Naive thymus-derived CD4-positive, alpha-beta T cell (primary cell): ENCODE measurements at regions of chr10 and their contacts with region 1.

Region 1: GRCh38 chr10:122407375-122408125 is 33.0 kb downstream of the PLEKHA1 start:
- DNase-seq: peak in 7 of 9 donors; percentile 53 to 78 (median 65)
- ATAC-seq: peak; percentile 76
- H3K4me3 ChIP-seq: no peak overlapping the region
- H3K4me3 Mint-ChIP-seq: peak overlapping the region in 9 of 10 donors; percentile 13 to 75 (median 53)
- H3K27ac ChIP-seq: peak overlapping the region; percentile 54
- H3K27ac Mint-ChIP-seq: peak overlapping the region in 6 of 9 donors; percentile 81 to 95 (median 88)
- H3K4me1 ChIP-seq: peaks cover 0 to 52% of the 10 kb centered on the region in 2 donors
- H3K4me1 Mint-ChIP-seq: peaks cover 18 to 61% (median 54%) of the 10 kb centered on the region in 7 donors
- H3K27me3 ChIP-seq: no peaks in the 10 kb centered on the region
- H3K27me3 Mint-ChIP-seq: peaks cover 0 to 7% (median 0%) of the 10 kb centered on the region in 5 donors

Region 2: GRCh38 chr10:121956111-121957061 is 451.2 kb before region 1 on chr10:
- CTCF ChIA-PET with region 1: no interaction called
- POLR2A ChIA-PET with region 1: no interaction called
- intact Hi-C with region 1: no loop called
- DNase-seq: no peak
- ATAC-seq: no peak
- H3K4me3 ChIP-seq: no peak overlapping the region
- H3K4me3 Mint-ChIP-seq: no peak overlapping the region
- H3K27ac ChIP-seq: no peak overlapping the region
- H3K27ac Mint-ChIP-seq: peak overlapping the region in 2 of 9 donors; percentile 11 to 37
- H3K4me1 ChIP-seq: no peaks in the 10 kb centered on the region
- H3K4me1 Mint-ChIP-seq: peaks cover 0 to 2% (median 0%) of the 10 kb centered on the region in 7 donors
- H3K27me3 ChIP-seq: no peaks in the 10 kb centered on the region
- H3K27me3 Mint-ChIP-seq: no peaks in the 10 kb centered on the region

Region 3: DNA sequence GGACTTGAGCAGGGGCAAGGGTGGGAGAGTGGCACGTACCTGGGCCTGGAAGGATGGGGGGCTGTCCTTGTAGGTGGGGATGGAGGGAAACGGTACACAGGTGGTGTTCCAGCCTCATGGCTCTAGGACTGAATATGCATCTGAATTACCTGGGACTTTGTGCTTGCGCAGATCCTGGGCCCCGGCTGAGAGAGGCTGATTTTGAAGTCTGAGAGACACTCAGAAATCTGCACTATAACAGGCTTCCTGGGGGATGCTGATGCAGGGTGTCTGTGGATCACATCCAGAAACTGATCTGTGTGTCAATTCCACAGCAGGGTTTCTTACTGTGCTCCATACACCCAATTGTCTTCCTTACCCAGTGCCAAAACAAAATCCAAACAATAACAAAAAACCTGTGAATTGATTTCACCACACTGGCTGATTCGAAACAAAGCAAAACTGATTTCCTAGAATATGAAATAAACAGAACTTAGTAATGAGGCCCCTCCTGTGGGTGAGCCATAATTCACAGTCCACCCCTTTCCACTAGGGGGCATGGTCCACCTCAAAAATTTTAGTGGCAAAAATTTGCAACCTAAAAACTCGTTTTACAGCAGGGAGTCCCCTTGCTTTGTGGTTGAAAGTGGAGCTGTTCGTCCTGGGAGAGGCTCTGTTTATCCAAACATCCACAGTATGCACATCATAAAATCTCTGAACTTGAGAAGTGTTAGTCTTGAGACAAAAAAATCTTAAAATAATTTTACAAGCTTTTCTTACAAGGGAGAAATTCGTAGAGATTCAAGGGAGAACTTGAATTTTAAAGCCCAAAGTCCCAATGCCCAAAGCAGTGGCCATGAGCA is 65.0 kb before region 1 on chr10:
- CTCF ChIA-PET with region 1: interaction called, 10 read pairs
- POLR2A ChIA-PET with region 1: interaction called, 3 read pairs
- intact Hi-C with region 1: no loop called
- DNase-seq: peak in 8 of 9 donors; percentile 33 to 78 (median 66)
- ATAC-seq: peak; percentile 80
- H3K4me3 ChIP-seq: no peak overlapping the region
- H3K4me3 Mint-ChIP-seq: peak overlapping the region in 1 of 10 donors; percentile 57
- H3K27ac ChIP-seq: no peak overlapping the region
- H3K27ac Mint-ChIP-seq: peak overlapping the region in 4 of 9 donors; percentile 12 to 75 (median 42)
- H3K4me1 ChIP-seq: no peaks in the 10 kb centered on the region
- H3K4me1 Mint-ChIP-seq: peaks cover 0 to 8% (median 6%) of the 10 kb centered on the region in 7 donors
- H3K27me3 ChIP-seq: no peaks in the 10 kb centered on the region
- H3K27me3 Mint-ChIP-seq: peaks cover 0 to 7% (median 0%) of the 10 kb centered on the region in 5 donors

Region 4: DNA sequence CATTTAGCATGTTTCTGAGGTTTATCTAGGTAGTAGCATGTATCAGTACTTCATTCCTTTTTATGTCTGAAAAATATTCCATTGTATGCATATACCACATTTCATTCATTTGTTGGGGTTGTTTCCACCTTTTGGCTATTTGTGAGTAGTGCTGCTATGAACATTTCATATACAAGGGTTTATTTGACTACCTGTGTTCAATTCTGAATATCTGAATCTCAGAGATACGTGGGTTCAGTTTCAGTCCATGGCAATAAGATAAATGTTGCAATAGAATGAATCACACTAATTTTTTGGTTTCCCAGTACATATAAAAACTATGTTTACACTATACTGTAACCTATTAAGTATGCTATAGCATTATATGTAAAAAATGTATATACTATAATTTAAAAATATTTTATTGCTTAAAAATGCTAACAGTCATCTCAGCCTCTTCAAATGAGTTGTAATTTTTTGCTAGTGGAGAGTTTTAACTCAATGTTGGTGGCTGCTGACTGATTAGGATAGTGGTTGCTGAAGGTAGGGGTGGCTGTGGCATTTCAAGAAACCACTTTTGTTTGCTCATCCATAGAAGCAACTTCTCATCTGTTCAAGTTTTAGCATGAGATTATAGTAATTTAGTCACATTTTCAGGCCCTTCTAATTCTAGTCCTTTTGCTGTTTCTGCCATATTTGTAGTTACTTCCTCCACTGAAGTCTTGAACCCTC is 19.1 kb before region 1 on chr10:
- CTCF ChIA-PET with region 1: interaction called, 3 read pairs
- POLR2A ChIA-PET with region 1: interaction called, 14 read pairs
- intact Hi-C with region 1: loop called in 1 of 2 experiments (anchors 1 kb)
- DNase-seq: no peak
- ATAC-seq: no peak
- H3K4me3 ChIP-seq: no peak overlapping the region
- H3K4me3 Mint-ChIP-seq: peak overlapping the region in 4 of 10 donors; percentile 36 to 65 (median 43)
- H3K27ac ChIP-seq: no peak overlapping the region
- H3K27ac Mint-ChIP-seq: peak overlapping the region in 4 of 9 donors; percentile 29 to 50 (median 34)
- H3K4me1 ChIP-seq: peaks cover 0 to 8% of the 10 kb centered on the region in 2 donors
- H3K4me1 Mint-ChIP-seq: peaks cover 0 to 92% (median 74%) of the 10 kb centered on the region in 7 donors
- H3K27me3 ChIP-seq: no peaks in the 10 kb centered on the region
- H3K27me3 Mint-ChIP-seq: peaks cover 0 to 26% (median 0%) of the 10 kb centered on the region in 5 donors

Region 5: GRCh38 chr10:122419876-122420623 is 12.5 kb after region 1 on chr10:
- CTCF ChIA-PET with region 1: interaction called, 3 read pairs
- POLR2A ChIA-PET with region 1: interaction called, 20 read pairs
- intact Hi-C with region 1: loop called in 1 of 2 experiments (anchors 1 kb)
- DNase-seq: peak in 1 of 9 donors; percentile 8
- ATAC-seq: no peak
- H3K4me3 ChIP-seq: no peak overlapping the region
- H3K4me3 Mint-ChIP-seq: peak overlapping the region in 7 of 10 donors; percentile 25 to 74 (median 38)
- H3K27ac ChIP-seq: peak overlapping the region; percentile 54
- H3K27ac Mint-ChIP-seq: peak overlapping the region in 8 of 9 donors; percentile 56 to 94 (median 84)
- H3K4me1 ChIP-seq: peaks cover 67 to 75% of the 10 kb centered on the region in 2 donors
- H3K4me1 Mint-ChIP-seq: peaks cover 40 to 95% (median 83%) of the 10 kb centered on the region in 7 donors
- H3K27me3 ChIP-seq: no peaks in the 10 kb centered on the region
- H3K27me3 Mint-ChIP-seq: peaks cover 0 to 2% (median 0%) of the 10 kb centered on the region in 5 donors

Region 6: GRCh38 chr10:122655524-122656307 is 248.2 kb after region 1 on chr10:
- CTCF ChIA-PET with region 1: no interaction called
- POLR2A ChIA-PET with region 1: no interaction called
- intact Hi-C with region 1: no loop called
- DNase-seq: no peak
- ATAC-seq: no peak
- H3K4me3 ChIP-seq: no peak overlapping the region
- H3K4me3 Mint-ChIP-seq: no peak overlapping the region
- H3K27ac ChIP-seq: no peak overlapping the region
- H3K27ac Mint-ChIP-seq: no peak overlapping the region
- H3K4me1 ChIP-seq: no peaks in the 10 kb centered on the region
- H3K4me1 Mint-ChIP-seq: no peaks in the 10 kb centered on the region
- H3K27me3 ChIP-seq: no peaks in the 10 kb centered on the region
- H3K27me3 Mint-ChIP-seq: peaks cover 16 to 54% (median 24%) of the 10 kb centered on the region in 5 donors